Endothelial cell of umbilical vein (primary cell): ENCODE measurements at regions of chr2 and their contacts with region 1.

Region 1: GRCh38 chr2:193111529-193111928 is 916.8 kb upstream of the TMEFF2 start:
- DNase-seq: no peak
- H3K4me3 ChIP-seq: no peak overlapping the region
- H3K27ac ChIP-seq: no peak overlapping the region
- H3K4me1 ChIP-seq: no peaks in the 10 kb centered on the region
- H3K27me3 ChIP-seq: no peaks in the 10 kb centered on the region
- CTCF ChIP-seq: no peak
- POLR2A ChIP-seq: no peak

Region 2: GRCh38 chr2:193072647-193073046 is 38.9 kb before region 1 on chr2:
- CTCF ChIA-PET with region 1: no interaction called
- POLR2A ChIA-PET with region 1: no interaction called
- dilution Hi-C with region 1: no loop called
- intact Hi-C with region 1: no loop called
- DNase-seq: no peak
- H3K4me3 ChIP-seq: no peak overlapping the region
- H3K27ac ChIP-seq: no peak overlapping the region
- H3K4me1 ChIP-seq: no peaks in the 10 kb centered on the region
- H3K27me3 ChIP-seq: no peaks in the 10 kb centered on the region
- CTCF ChIP-seq: no peak
- POLR2A ChIP-seq: no peak

Region 3: GRCh38 chr2:193156480-193156879 is 45.0 kb after region 1 on chr2:
- CTCF ChIA-PET with region 1: no interaction called
- POLR2A ChIA-PET with region 1: no interaction called
- dilution Hi-C with region 1: no loop called
- intact Hi-C with region 1: loop called (anchors 2 kb)
- DNase-seq: no peak
- H3K4me3 ChIP-seq: no peak overlapping the region
- H3K27ac ChIP-seq: no peak overlapping the region
- H3K4me1 ChIP-seq: no peaks in the 10 kb centered on the region
- H3K27me3 ChIP-seq: no peaks in the 10 kb centered on the region
- CTCF ChIP-seq: no peak
- POLR2A ChIP-seq: no peak